Psoas muscle (tissue), 8 donors: ENCODE measurements at regions of chr7 and their contacts with region 1.

Region 1: GRCh38 chr7:139494835-139495579 is 11.5 kb upstream of the KLRG2 start:
- DNase-seq: no peak
- ATAC-seq: no peak
- H3K4me3 ChIP-seq: no peak overlapping the region
- H3K27ac ChIP-seq: no peak overlapping the region
- H3K4me1 ChIP-seq: no peaks in the 10 kb centered on the region
- H3K27me3 ChIP-seq: peaks cover 0 to 1% (median 0%) of the 10 kb centered on the region in 3 donors
- CTCF ChIP-seq: no peak

Region 2: GRCh38 chr7:139426258-139427028 is 68.6 kb before region 1 on chr7:
- intact Hi-C with region 1: no loop called
- DNase-seq: no peak
- ATAC-seq: peak; percentile 47 to 82 (median 69)
- H3K4me3 ChIP-seq: no peak overlapping the region
- H3K27ac ChIP-seq: no peak overlapping the region
- H3K4me1 ChIP-seq: peaks cover 9% of the 10 kb centered on the region
- H3K27me3 ChIP-seq: no peaks in the 10 kb centered on the region
- CTCF ChIP-seq: no peak

Region 3: GRCh38 chr7:139626817-139627216 is 131.8 kb after region 1 on chr7:
- intact Hi-C with region 1: loop called (anchors 2 to 5 kb)
- DNase-seq: no peak
- ATAC-seq: no peak
- H3K4me3 ChIP-seq: no peak overlapping the region
- H3K27ac ChIP-seq: no peak overlapping the region
- H3K4me1 ChIP-seq: no peaks in the 10 kb centered on the region
- H3K27me3 ChIP-seq: no peaks in the 10 kb centered on the region
- CTCF ChIP-seq: no peak